Transverse colon (tissue), 4 donors: ENCODE measurements at regions of chr5 and their contacts with region 1.

Region 1: GRCh38 chr5:122515709-122516431 is 203.8 kb downstream of the SNCAIP start:
- DNase-seq: peak; percentile 25
- H3K4me3 ChIP-seq: no peak overlapping the region
- H3K27ac ChIP-seq: no peak overlapping the region
- H3K4me1 ChIP-seq: no peaks in the 10 kb centered on the region
- H3K27me3 ChIP-seq: no peaks in the 10 kb centered on the region
- CTCF ChIP-seq: peak; percentile 52 to 64 (median 55)
- EP300 ChIP-seq: no peak
- POLR2A ChIP-seq: no peak

Region 2: DNA sequence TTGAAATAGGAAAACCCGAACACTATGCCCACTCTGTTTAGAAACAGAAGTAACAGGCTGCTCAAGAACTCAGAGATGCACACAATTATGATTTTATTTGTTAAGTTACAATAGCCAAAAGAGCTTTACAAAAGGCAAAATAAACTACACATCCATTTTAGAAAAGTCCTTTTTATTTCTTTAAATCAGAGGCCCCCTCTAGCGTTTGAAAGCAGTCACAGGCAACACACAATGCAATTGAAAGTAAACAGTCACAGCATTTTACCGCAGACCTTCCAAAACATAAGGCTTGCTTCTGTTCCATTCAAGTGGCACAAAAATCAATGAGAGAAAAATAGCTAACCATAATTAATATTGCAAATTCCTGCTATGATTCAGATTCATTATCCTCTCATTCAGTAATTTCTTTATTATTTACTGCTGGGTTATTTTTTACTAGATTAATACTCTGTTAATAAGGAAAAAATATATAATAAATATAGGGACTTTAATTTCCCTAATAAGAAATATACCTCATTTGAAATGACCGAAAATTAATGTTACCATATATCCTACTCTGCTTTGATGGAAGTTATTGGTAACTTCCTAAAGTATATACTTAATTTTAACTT is 829.1 kb after region 1 on chr5:
- in situ Hi-C with region 1: loop called in 3 of 4 experiments (anchors 25 kb)
- intact Hi-C with region 1: no loop called
- DNase-seq: no peak
- H3K4me3 ChIP-seq: no peak overlapping the region
- H3K27ac ChIP-seq: no peak overlapping the region
- H3K4me1 ChIP-seq: no peaks in the 10 kb centered on the region
- H3K27me3 ChIP-seq: no peaks in the 10 kb centered on the region
- CTCF ChIP-seq: peak; percentile 29 to 64 (median 53)
- EP300 ChIP-seq: no peak
- POLR2A ChIP-seq: no peak

Region 3: DNA sequence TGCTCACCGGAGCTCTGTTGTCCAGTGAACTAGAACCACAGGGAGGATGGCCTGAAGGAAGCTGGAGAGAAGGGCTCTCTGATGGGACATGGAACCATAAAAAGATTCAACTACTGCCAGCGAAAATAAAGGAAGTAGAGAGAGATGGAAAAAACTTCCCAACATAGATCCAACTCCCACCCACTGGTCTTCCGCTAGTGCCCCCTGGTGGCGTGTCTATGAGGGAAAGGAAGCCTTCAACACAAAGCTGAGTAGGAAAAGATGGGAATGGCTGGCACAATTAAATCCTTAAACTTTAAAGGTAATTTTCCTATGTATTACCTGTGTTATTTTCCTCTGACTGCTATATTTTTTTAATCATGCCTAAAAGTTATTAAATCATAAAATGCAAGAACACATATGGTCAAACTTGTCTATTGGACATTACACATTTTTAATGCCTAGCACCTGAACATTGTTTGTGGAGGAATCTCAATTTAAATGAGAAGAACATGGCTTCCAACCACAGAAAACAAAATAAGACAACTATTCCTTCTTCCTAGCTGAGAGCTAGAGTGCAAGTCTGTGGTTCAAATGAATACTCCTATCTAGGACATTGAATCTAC is 855.8 kb after region 1 on chr5:
- in situ Hi-C with region 1: loop called in 2 of 4 experiments (anchors 25 kb)
- intact Hi-C with region 1: no loop called
- DNase-seq: peak; percentile 56
- H3K4me3 ChIP-seq: no peak overlapping the region
- H3K27ac ChIP-seq: no peak overlapping the region
- H3K4me1 ChIP-seq: no peaks in the 10 kb centered on the region
- H3K27me3 ChIP-seq: no peaks in the 10 kb centered on the region
- CTCF ChIP-seq: peak; percentile 32 to 60 (median 43)
- EP300 ChIP-seq: no peak
- POLR2A ChIP-seq: no peak

Region 4: GRCh38 chr5:123582550-123583285 is 1066.8 kb after region 1 on chr5:
- in situ Hi-C with region 1: loop called in 1 of 4 experiments (anchors 25 kb)
- intact Hi-C with region 1: no loop called
- DNase-seq: no peak
- H3K4me3 ChIP-seq: no peak overlapping the region
- H3K27ac ChIP-seq: peak overlapping the region in 2 of 4 donors; percentile 8 to 40
- H3K4me1 ChIP-seq: peaks cover 0 to 41% (median 5%) of the 10 kb centered on the region in 4 donors
- H3K27me3 ChIP-seq: no peaks in the 10 kb centered on the region
- CTCF ChIP-seq: no peak
- EP300 ChIP-seq: no peak
- POLR2A ChIP-seq: no peak

Region 5: DNA sequence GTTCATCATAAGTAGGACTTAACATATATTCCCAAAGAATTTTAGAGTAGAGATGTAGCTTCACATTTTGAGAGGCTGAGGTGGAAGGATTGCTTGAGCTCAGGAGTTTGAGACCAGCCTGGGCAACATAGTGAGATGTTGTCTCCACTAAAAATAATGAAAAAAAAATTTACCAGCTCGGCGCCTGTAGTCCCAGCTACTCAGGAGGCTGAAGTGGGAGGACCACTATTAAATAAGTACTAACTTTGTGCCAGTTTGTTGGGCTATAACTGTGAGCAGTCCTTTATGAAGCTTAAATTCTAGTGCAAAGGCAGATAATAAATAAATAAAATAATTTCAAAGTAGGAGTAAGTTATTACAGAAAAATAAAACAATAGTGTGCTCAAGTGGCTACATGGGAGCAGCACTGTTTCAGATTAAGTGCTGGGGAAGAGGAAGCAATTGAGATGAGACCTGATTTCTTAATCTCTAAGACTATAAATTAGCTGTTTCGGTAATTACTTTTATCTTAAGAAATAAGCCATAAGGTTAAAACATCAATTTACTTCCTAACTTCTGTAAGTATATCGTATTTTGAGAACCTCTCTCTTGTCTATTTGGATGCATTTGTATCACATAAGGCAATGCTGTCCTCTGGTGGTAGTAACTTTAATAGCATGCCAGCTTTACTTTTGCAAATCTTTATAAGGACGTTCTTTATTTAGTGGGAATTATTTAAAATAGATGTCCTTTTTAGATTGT is 1095.0 kb after region 1 on chr5:
- in situ Hi-C with region 1: loop called in 2 of 4 experiments (anchors 25 kb)
- intact Hi-C with region 1: no loop called
- DNase-seq: no peak
- H3K4me3 ChIP-seq: no peak overlapping the region
- H3K27ac ChIP-seq: no peak overlapping the region
- H3K4me1 ChIP-seq: peaks cover 0 to 8% (median 2%) of the 10 kb centered on the region in 4 donors
- H3K27me3 ChIP-seq: no peaks in the 10 kb centered on the region
- CTCF ChIP-seq: peak; percentile 93 to 99 (median 97)
- EP300 ChIP-seq: no peak
- POLR2A ChIP-seq: no peak